ENCODE measurements at regions of chr9 and their contacts with region 1.

Region 1: GRCh38 chr9:92911511-92912475 is 34.0 kb upstream of the ZNF484 start:
- DNase-seq: no peak
- ATAC-seq: no peak
- H3K4me3 Mint-ChIP-seq: no peak overlapping the region
- H3K27ac Mint-ChIP-seq: no peak overlapping the region
- H3K4me1 Mint-ChIP-seq: peaks cover 18% of the 10 kb centered on the region
- H3K27me3 Mint-ChIP-seq: no peaks in the 10 kb centered on the region; the same call in 1 of the 2 replicates
- CTCF ChIP-seq: no peak

Region 2: GRCh38 chr9:92696619-92697018 is 215.2 kb before region 1 on chr9:
- CTCF ChIA-PET with region 1: no interaction called
- POLR2A ChIA-PET with region 1: no interaction called
- DNase-seq: no peak
- ATAC-seq: no peak
- H3K4me3 Mint-ChIP-seq: no peak overlapping the region
- H3K27ac Mint-ChIP-seq: no peak overlapping the region
- H3K4me1 Mint-ChIP-seq: no peaks in the 10 kb centered on the region
- H3K27me3 Mint-ChIP-seq: peaks cover 7% of the 10 kb centered on the region; the same call in 1 of the 2 replicates
- CTCF ChIP-seq: no peak

Region 3: DNA sequence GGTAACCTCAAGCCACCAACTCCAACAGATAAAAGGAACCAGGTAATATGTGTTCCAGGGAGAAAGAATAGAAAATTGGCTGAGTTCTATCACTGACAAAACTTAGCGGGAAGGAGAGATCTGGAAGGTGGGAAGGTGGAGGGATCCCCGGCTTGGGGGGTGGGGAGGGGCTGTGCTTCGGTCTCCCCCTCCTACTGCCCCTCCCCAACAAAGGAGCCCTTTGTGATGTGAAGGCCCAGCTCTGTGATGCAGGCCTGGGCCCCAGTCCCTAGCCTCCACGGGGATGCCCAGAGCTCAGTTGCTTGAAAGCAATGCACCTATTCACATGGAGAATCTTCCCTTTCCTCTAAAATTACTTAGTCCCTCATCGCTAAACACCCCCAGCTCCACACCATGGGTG is 29.5 kb before region 1 on chr9:
- CTCF ChIA-PET with region 1: interaction called, 12 read pairs
- POLR2A ChIA-PET with region 1: no interaction called
- DNase-seq: peak; percentile 51
- ATAC-seq: no peak
- H3K4me3 Mint-ChIP-seq: no peak overlapping the region; the same call in 1 of the 2 replicates
- H3K27ac Mint-ChIP-seq: no peak overlapping the region; the same call in 1 of the 2 replicates
- H3K4me1 Mint-ChIP-seq: peaks cover 34% of the 10 kb centered on the region
- H3K27me3 Mint-ChIP-seq: peaks cover 31% of the 10 kb centered on the region
- CTCF ChIP-seq: no peak

Region 4: DNA sequence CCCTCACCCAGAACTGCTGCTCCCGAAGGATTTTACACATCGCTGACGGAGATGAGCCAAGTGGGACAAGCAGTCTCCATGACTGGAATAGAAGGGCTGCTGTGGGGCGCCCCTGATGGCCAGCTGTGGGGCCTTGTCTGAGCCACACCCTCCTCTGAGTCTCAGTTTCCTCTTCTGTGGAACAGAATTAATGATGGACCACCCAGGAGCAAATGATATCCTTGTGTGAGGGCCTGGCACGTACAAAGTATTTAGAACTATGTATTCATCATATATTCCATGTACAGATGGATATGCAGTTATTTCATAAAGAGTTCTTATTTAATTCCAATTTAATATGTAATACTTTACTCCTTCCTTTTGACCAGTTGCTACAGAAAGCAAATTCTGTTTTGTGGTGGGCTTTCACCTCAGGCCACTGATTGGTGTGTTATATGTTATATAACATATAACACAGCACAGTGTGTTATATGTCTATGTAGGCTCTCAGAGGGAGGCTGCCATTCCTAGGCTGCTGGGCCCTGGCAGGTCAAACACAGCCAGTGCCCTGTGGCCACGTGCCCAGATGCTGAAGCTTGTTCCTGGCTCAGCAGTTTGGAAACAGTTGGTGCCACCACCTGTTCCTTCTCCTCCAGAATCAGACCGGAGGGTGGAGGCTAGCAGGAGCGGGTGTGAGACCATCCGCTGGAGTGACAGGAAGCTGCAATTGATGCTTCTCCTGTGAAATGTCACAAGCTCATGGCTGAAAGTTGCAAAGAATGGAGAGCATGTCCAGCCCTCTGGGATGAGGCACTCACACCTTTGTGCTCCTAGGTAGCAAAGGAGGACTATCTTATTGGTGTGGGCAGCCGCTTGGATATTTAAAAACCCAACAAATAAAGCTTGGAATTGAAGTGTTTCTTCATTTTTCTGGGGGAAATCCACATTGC is 31.2 kb after region 1 on chr9:
- CTCF ChIA-PET with region 1: no interaction called
- POLR2A ChIA-PET with region 1: no interaction called
- DNase-seq: no peak
- ATAC-seq: no peak
- H3K4me3 Mint-ChIP-seq: no peak overlapping the region
- H3K27ac Mint-ChIP-seq: no peak overlapping the region
- H3K4me1 Mint-ChIP-seq: peaks cover 12% of the 10 kb centered on the region
- H3K27me3 Mint-ChIP-seq: peaks cover 8% of the 10 kb centered on the region; the same call in 1 of the 2 replicates
- CTCF ChIP-seq: no peak